PC-3 (cell line): ENCODE measurements at regions of chr4 and their contacts with region 1.

Region 1: DNA sequence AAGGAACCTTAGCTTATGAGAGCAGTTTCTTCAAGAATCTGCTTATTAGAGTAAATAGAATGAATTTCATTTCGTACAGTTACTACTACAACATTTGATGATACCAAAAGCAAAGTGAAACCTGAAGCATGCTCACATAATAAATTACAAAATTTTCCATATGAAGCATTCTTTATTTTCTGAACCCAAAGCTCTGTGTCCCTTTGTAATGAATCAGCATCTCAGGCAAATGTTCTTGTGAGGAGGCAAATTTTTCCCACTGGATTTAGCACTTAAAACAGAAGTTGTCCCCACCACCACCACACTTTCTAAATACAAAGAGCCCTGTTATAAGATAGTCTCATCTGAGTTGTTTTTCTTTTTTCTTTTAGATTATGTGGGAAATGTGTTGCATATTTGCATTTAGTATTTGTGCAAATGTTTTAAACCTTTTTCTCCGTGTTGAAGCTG is 70.7 kb upstream of the NFKB1 start:
- DNase-seq: peak; percentile 3
- ATAC-seq: no peak
- H3K4me3 ChIP-seq: peak overlapping the region; percentile 85
- H3K27ac ChIP-seq: peak overlapping the region; percentile 67
- H3K4me1 ChIP-seq: peaks cover 9% of the 10 kb centered on the region
- H3K27me3 ChIP-seq: no peaks in the 10 kb centered on the region
- CTCF ChIP-seq: no peak

Region 2: DNA sequence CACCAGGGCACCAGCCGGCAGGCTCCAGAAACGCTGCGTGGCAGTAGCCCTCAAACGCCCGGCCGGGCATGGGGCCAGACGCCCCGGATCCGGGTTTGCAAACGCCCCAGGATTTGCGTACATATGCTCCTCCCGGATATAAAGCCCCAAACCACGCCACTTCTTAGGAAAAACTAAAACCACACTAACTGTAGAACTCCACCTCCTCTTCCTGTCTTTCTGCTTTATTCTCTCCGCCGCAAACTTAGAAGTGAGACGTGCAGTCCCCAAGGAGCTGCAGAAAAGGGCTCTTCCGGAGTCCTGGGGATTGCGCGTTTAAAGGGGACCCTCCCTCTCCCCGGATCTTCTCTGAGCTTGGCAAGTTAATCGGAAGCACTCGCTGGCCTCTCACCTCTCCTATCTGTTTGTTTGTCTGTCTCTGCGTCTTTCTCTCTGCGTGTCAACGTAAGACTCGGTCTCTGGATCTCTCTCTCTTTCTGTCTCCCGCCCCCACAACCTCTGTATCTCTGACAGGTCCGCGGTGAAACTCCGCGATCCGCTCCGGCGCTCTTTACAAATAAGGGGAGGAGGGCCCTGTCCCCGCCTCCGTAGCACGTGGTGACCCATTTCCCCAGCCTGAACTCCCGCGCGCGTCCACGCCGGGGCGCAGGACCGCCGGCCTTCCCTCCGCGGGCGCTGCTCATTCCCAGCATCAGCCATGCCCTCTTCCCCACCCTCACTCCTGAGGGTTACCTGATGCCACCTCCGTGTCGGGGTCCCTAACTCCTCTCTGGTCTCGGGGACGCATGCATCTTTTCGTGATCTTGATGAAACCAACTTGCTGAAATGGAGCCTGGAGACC is 85.3 kb before region 1 on chr4 and contains the start of gene SLC39A8:
- CTCF ChIA-PET with region 1: no interaction called
- POLR2A ChIA-PET with region 1: no interaction called
- intact Hi-C with region 1: loop called (anchors 1 kb)
- DNase-seq: peak; percentile 77
- ATAC-seq: peak; percentile 80
- H3K4me3 ChIP-seq: peak within 1 kb of the TSS; percentile 82
- H3K27ac ChIP-seq: peak within 1 kb of the TSS; percentile 23; the same call in 1 of the 2 replicates
- H3K4me1 ChIP-seq: peaks cover 5% of the 10 kb centered on the region; the same call in 1 of the 2 replicates
- H3K27me3 ChIP-seq: no peaks in the 10 kb centered on the region
- CTCF ChIP-seq: peak; percentile 65
- total RNA-seq, gene SLC39A8: 15.8 and 19.5 TPM in 2 replicates

Region 3: GRCh38 chr4:102500696-102501446 is 70.4 kb after region 1 on chr4 and contains the start of gene NFKB1:
- CTCF ChIA-PET with region 1: interaction called, 10 read pairs
- POLR2A ChIA-PET with region 1: no interaction called
- intact Hi-C with region 1: no loop called
- DNase-seq: peak; percentile 61
- ATAC-seq: peak; percentile 66
- H3K4me3 ChIP-seq: peak within 1 kb of the TSS; percentile 97
- H3K27ac ChIP-seq: peak within 1 kb of the TSS; percentile 88
- H3K4me1 ChIP-seq: peaks cover 22% of the 10 kb centered on the region
- H3K27me3 ChIP-seq: no peaks in the 10 kb centered on the region
- CTCF ChIP-seq: no peak
- total RNA-seq, gene NFKB1: 22.2 and 22.4 TPM in 2 replicates

Region 4: DNA sequence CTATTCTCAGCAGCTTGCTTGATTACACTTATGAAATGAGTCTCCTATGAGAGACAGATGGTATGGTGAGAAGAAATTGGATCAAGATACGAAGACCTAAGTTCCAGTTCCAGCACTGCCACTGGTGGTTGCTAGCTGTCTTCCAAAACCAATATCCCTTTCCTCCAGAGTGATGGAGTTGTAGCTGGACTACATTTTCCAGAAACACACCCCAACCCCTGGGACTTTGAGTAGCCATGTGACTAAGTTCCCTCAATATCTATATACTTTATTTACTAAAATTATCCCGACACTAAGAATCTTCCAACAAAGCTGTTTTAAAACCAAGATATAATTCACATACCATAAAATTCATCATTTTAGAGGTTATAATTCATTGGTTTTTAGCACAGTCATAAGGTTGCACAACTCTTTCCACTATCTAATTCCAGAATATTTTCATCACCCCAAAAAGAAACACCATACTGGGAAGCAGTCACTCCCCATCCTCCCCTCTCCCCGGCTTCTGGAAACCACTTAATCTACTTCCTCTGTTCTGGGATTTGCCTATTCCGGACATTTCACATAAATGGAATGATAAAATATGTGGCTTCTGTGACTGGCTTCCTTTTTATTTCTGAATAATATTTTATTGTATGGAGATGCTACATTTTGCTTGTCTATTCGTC is 212.3 kb after region 1 on chr4:
- CTCF ChIA-PET with region 1: interaction called, 10 read pairs
- POLR2A ChIA-PET with region 1: no interaction called
- intact Hi-C with region 1: no loop called
- DNase-seq: no peak
- ATAC-seq: no peak
- H3K4me3 ChIP-seq: no peak overlapping the region
- H3K27ac ChIP-seq: no peak overlapping the region
- H3K4me1 ChIP-seq: peaks cover 18% of the 10 kb centered on the region
- H3K27me3 ChIP-seq: no peaks in the 10 kb centered on the region
- CTCF ChIP-seq: no peak

Region 5: DNA sequence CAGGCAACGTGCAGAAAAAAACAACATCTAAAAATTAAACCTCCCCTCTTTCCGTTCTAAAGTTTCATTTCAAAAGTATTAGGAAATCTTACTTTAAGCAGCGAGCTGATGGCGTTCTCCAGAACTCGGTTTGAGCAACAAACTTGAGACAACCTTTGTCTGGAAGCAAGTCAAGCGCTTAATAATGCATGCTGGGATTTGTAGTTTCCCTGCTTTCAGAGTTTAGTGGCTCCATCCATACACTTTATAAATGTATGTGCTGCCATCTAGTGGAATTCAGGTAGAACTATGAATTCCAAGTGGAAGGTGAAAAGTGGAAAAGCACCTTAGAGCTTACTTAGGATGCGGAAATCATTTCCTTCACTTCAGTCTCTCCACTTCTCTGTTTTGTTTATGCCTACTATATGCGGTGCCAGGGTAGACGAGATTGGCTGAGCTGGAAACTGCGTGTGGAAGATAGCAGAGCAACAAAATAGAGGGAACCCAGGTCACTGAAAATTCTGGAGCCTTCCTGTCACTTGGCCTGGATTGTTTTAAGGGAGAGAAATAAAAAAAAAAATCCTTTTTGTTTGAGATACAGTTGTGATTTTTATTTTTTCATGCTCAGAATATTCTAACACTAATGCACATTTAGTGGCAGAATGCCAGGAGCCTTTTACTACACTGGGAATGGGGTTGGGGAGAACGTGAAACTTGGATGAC is 669.4 kb after region 1 on chr4 and contains the start of gene BDH2:
- CTCF ChIA-PET with region 1: no interaction called
- POLR2A ChIA-PET with region 1: no interaction called
- intact Hi-C with region 1: loop called (anchors 1 kb)
- DNase-seq: peak; percentile 89
- ATAC-seq: peak; percentile 93
- H3K4me3 ChIP-seq: peak within 1 kb of the TSS; percentile 68
- H3K27ac ChIP-seq: no peak within 1 kb of the TSS
- H3K4me1 ChIP-seq: peaks cover 9% of the 10 kb centered on the region; the same call in 1 of the 2 replicates
- H3K27me3 ChIP-seq: no peaks in the 10 kb centered on the region
- CTCF ChIP-seq: peak; percentile 74
- total RNA-seq, gene BDH2: 10.5 and 16.0 TPM in 2 replicates